CD4-positive, alpha-beta memory T cell (primary cell): ENCODE measurements at regions of chr2 and their contacts with region 1.

Region 1: GRCh38 chr2:70340921-70341765 is 39.3 kb upstream of the FAM136A start:
- DNase-seq: peak; percentile 41 to 50 (median 47)
- H3K4me3 ChIP-seq: no peak overlapping the region
- H3K4me3 Mint-ChIP-seq: peak overlapping the region in 1 of 8 donors; percentile 0
- H3K27ac ChIP-seq: no peak overlapping the region
- H3K27ac Mint-ChIP-seq: no peak overlapping the region
- H3K4me1 ChIP-seq: no peaks in the 10 kb centered on the region
- H3K4me1 Mint-ChIP-seq: peaks cover 0 to 2% (median under 1%) of the 10 kb centered on the region in 4 donors
- H3K27me3 ChIP-seq: no peaks in the 10 kb centered on the region
- H3K27me3 Mint-ChIP-seq: peaks cover 5 to 12% of the 10 kb centered on the region in 2 donors

Region 2: GRCh38 chr2:70553584-70554337 is 212.6 kb after region 1 on chr2 and contains the start of gene TGFA:
- CTCF ChIA-PET with region 1: interaction called, 4 read pairs
- POLR2A ChIA-PET with region 1: no interaction called
- intact Hi-C with region 1: loop called (anchors 5 kb)
- DNase-seq: peak; percentile 63 to 73 (median 65)
- H3K4me3 ChIP-seq: peak within 1 kb of the TSS; percentile 47 to 62
- H3K4me3 Mint-ChIP-seq: peak within 1 kb of the TSS; percentile 87 to 96 (median 91)
- H3K27ac ChIP-seq: peak within 1 kb of the TSS; percentile 45
- H3K27ac Mint-ChIP-seq: peak within 1 kb of the TSS; percentile 80 to 94 (median 88)
- H3K4me1 ChIP-seq: peaks cover 26% of the 10 kb centered on the region
- H3K4me1 Mint-ChIP-seq: peaks cover 14 to 40% (median 26%) of the 10 kb centered on the region in 4 donors
- H3K27me3 ChIP-seq: peaks cover 5% of the 10 kb centered on the region
- H3K27me3 Mint-ChIP-seq: peaks cover 3 to 19% of the 10 kb centered on the region in 2 donors
- total RNA-seq, gene TGFA: 2.9 to 4.2 TPM

Region 3: DNA sequence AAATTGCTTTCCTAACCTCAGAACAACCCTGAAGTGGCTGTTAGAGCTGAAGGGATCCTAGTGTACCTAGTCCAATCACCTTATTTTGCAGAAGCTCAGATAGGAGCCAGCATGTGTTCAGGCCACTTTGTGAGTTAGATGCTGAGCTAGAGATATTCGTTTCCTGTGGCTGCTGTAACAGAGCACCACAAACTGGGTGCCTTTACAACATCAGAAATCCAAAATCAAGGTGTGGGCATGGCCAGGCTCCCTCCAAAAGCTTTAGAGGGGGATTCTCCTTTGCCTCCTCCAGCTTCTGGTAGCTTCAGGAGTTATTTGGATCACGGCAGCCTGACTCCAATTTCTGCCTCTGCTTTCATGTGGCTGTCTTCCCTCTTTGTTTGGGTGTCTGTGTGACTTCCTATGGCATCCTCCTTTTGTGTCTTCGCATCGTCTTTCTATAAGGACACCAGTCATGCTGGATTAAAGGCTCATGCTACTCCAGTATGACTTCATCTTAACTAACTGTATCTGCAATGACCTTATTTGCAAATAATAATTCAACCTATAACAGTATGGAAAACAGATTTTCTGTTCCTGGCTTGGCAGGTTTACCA is 298.8 kb after region 1 on chr2:
- CTCF ChIA-PET with region 1: interaction called, 30 read pairs
- POLR2A ChIA-PET with region 1: no interaction called
- intact Hi-C with region 1: no loop called
- DNase-seq: no peak
- H3K4me3 ChIP-seq: no peak overlapping the region
- H3K4me3 Mint-ChIP-seq: peak overlapping the region in 5 of 8 donors; percentile 0 to 53 (median 34)
- H3K27ac ChIP-seq: no peak overlapping the region
- H3K27ac Mint-ChIP-seq: peak overlapping the region in 4 of 7 donors; percentile 4 to 67 (median 30)
- H3K4me1 ChIP-seq: peaks cover 29% of the 10 kb centered on the region
- H3K4me1 Mint-ChIP-seq: peaks cover 18 to 32% (median 25%) of the 10 kb centered on the region in 4 donors
- H3K27me3 ChIP-seq: no peaks in the 10 kb centered on the region
- H3K27me3 Mint-ChIP-seq: peaks cover 0 to 1% of the 10 kb centered on the region in 2 donors

Region 4: GRCh38 chr2:70733646-70734180 is 392.6 kb after region 1 on chr2:
- CTCF ChIA-PET with region 1: no interaction called
- POLR2A ChIA-PET with region 1: no interaction called
- intact Hi-C with region 1: no loop called
- DNase-seq: no peak
- H3K4me3 ChIP-seq: no peak overlapping the region
- H3K4me3 Mint-ChIP-seq: no peak overlapping the region
- H3K27ac ChIP-seq: no peak overlapping the region
- H3K27ac Mint-ChIP-seq: no peak overlapping the region
- H3K4me1 ChIP-seq: no peaks in the 10 kb centered on the region
- H3K4me1 Mint-ChIP-seq: no peaks in the 10 kb centered on the region
- H3K27me3 ChIP-seq: no peaks in the 10 kb centered on the region
- H3K27me3 Mint-ChIP-seq: peaks cover 9 to 18% of the 10 kb centered on the region in 2 donors